ENCODE measurements at regions of chr19 and their contacts with region 1.

Region 1: GRCh38 chr19:2096480-2097329 is at the start of gene IZUMO4:
- DNase-seq: peak; percentile 71
- ATAC-seq: peak; percentile 83
- H3K4me3 ChIP-seq: peak within 1 kb of the TSS; percentile 93
- H3K27ac ChIP-seq: peak within 1 kb of the TSS; percentile 93
- H3K4me1 ChIP-seq: peaks cover 21% of the 10 kb centered on the region
- H3K27me3 ChIP-seq: no peaks in the 10 kb centered on the region
- CTCF ChIP-seq: peak; percentile 41 to 73 (median 54)
- EP300 ChIP-seq: no peak
- POLR2A ChIP-seq: no peak; the same call in 1 of the 2 replicates
- RAD21 ChIP-seq: no peak
- polyA plus RNA-seq, gene IZUMO4: 0.53 to 1.9 TPM

Region 2: DNA sequence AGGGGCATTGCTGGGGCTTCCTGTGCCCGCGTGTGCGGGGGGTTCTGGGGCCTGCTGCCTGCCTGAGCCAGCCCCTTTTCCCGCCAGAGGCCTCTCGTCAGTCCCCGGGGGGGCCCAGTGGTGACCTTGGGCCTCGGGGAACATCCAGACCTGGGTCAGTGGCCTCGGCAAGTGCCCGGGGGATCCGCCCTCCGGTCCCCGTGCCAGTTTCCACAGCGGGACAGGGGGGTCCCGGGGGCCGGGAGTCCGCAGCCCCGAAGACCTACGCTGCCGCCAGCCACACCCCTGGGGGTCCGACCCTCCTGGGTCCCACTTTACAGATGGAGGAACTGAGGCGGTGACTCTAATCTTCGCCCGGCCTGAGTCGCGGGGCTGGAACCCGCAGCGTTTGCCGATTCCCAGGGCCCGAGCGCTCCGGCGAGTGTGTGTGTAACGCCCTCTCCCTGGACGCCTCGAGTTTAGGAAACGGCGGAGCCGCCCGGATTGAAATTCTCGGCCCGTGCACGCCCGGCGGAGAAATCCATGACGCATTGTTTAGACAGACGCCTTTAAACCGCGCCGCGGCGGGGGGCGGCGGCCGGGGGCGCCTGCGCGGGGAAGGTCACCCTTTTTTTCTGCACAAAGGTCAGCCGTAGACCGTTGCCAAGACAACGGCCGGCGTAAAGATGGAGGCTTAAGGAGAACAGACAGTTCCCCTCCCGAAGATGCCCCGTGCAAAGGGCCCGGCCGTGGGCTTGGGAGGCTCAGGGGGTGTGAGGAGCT is 771.7 kb before region 1 on chr19:
- CTCF ChIA-PET with region 1: no interaction called
- POLR2A ChIA-PET with region 1: no interaction called
- RAD21 ChIA-PET with region 1: no interaction called
- SMC1A ChIA-PET with region 1: no interaction called
- in situ Hi-C with region 1: no loop called
- intact Hi-C with region 1: no loop called
- DNase-seq: no peak
- ATAC-seq: no peak; the same call in 2 of the 3 replicates
- H3K4me3 ChIP-seq: no peak overlapping the region
- H3K27ac ChIP-seq: no peak overlapping the region
- H3K4me1 ChIP-seq: no peaks in the 10 kb centered on the region
- H3K27me3 ChIP-seq: peaks cover 6 to 10% of the 10 kb centered on the region in 2 experiments; a peak in 3 of 4 replicates
- CTCF ChIP-seq: no peak
- EP300 ChIP-seq: no peak
- POLR2A ChIP-seq: no peak
- RAD21 ChIP-seq: no peak

Region 3: GRCh38 chr19:1956868-1957492 is 139.7 kb before region 1 on chr19:
- CTCF ChIA-PET with region 1: no interaction called
- POLR2A ChIA-PET with region 1: no interaction called
- RAD21 ChIA-PET with region 1: no interaction called
- SMC1A ChIA-PET with region 1: no interaction called
- in situ Hi-C with region 1: no loop called
- intact Hi-C with region 1: no loop called
- DNase-seq: no peak
- ATAC-seq: no peak
- H3K4me3 ChIP-seq: no peak overlapping the region
- H3K27ac ChIP-seq: no peak overlapping the region
- H3K4me1 ChIP-seq: no peaks in the 10 kb centered on the region
- H3K27me3 ChIP-seq: no peaks in the 10 kb centered on the region
- CTCF ChIP-seq: no peak
- EP300 ChIP-seq: no peak
- POLR2A ChIP-seq: no peak
- RAD21 ChIP-seq: no peak

Region 4: DNA sequence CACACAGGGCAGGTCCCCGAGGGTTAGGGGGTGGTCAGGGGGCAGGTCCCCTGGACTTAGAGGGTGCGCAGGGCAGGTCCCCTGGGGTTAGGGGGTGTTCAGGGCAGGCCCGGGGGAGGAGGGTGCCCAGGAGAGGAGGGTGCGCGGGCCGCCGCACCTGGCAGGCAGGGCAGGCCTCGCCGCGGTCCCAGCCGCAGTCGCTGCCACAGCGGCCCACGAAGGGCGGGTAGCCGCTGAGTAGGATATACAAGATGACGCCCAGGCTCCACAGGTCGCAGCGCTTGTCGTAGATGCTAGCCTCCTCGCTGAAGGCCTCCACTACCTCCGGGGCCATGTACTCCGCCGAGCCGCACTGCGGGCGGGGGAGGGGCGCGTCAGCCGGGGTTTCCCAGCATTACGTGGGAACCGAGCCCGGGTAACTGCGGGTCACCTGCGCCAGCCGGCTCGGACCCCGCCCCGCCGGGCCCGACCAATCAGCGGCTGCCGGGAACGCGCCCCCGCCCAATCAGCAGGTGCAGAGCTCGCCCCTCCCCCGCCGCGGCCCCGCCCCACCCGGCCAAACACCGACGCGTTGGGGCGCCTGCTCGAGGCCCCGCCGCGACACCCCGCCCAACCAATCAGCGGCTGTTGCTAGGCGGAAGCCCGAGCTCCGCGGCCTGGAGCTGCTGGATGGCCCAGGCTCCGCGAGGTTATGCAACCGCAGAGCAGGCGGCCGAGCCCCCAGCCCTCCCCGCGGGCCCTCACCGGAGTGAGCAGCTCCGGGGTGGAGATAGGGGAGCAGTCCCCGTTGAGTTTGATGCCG is 54.8 kb before region 1 on chr19:
- CTCF ChIA-PET with region 1: interaction called, 10 read pairs
- POLR2A ChIA-PET with region 1: interaction called, 37 read pairs
- RAD21 ChIA-PET with region 1: interaction called, 10 read pairs
- SMC1A ChIA-PET with region 1: interaction called, 4 read pairs
- in situ Hi-C with region 1: no loop called
- intact Hi-C with region 1: no loop called
- DNase-seq: peak; percentile 73
- ATAC-seq: peak; percentile 86
- H3K4me3 ChIP-seq: peak overlapping the region; percentile 71
- H3K27ac ChIP-seq: peak overlapping the region; percentile 92
- H3K4me1 ChIP-seq: peaks cover 39% of the 10 kb centered on the region
- H3K27me3 ChIP-seq: no peaks in the 10 kb centered on the region
- CTCF ChIP-seq: no peak
- EP300 ChIP-seq: peak; percentile 41 to 64; a peak in 1 of 4 replicates
- POLR2A ChIP-seq: peak; percentile 87
- RAD21 ChIP-seq: no peak

Region 5: DNA sequence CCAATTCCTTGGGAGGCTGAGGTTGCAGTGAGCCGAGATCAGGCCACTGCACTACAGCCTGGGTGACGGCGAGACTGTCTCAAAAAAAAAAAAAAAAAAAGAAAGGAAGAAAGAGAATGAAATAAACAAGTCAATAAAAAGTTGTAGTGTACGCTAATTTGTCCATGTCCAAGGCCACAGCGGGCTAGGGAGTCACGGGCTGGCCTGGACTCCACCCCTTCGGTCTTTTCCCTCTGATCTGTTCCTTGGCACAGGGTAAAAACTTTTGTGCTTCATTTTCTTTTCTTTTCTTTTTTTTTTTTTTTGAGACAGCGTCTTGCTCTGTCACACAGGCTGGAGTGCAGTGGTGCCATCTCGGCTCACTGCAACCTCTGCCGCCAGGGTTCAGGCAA is 26.3 kb before region 1 on chr19:
- CTCF ChIA-PET with region 1: interaction called, 3 read pairs
- POLR2A ChIA-PET with region 1: interaction called, 11 read pairs
- RAD21 ChIA-PET with region 1: interaction called, 4 read pairs
- SMC1A ChIA-PET with region 1: interaction called, 4 read pairs
- in situ Hi-C with region 1: no loop called
- intact Hi-C with region 1: no loop called
- DNase-seq: no peak
- ATAC-seq: no peak; the same call in 2 of the 3 replicates
- H3K4me3 ChIP-seq: no peak overlapping the region
- H3K27ac ChIP-seq: no peak overlapping the region
- H3K4me1 ChIP-seq: peaks cover 17% of the 10 kb centered on the region
- H3K27me3 ChIP-seq: no peaks in the 10 kb centered on the region
- CTCF ChIP-seq: no peak
- EP300 ChIP-seq: no peak
- POLR2A ChIP-seq: no peak
- RAD21 ChIP-seq: no peak

Region 6: DNA sequence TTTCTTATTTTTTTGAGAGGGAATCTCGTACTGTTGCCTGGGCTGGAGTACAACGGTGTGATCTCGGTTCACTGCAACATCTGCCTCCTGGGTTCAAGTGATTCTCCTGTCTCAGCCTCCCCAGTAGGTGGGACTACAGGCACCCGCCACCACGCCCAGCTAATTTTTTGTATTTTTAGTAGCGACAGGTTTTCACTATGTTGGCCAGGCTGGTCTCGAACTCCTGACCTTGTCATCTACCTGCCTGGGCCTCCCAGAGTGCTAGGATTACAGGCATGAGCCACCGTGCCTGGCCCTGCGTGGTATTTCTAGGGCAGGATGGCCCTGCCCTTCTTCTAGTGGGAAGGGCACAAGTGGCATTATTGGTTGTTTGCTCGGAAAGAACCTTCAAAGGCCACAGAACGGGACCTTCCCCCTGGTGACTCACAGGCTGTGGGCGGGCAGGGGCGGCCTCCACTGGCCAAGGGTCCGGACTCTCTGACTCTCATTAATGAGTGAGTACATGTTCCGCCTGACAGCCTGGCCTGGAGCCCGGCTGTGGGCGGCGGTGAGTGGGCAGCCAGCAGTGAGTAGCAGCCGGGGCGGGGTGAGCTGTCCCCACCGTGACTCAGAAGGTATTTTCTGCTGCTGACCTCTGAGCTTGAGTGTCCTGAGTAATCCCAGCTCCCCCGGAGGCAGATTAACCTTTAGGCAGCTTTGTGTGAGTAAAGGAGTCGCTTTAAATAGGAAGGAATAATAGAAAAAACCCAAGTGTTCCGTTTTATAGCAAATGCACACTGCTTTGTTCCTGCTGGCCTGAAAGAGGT is 72.1 kb after region 1 on chr19:
- CTCF ChIA-PET with region 1: no interaction called
- POLR2A ChIA-PET with region 1: interaction called, 16 read pairs
- RAD21 ChIA-PET with region 1: interaction called, 4 read pairs
- SMC1A ChIA-PET with region 1: no interaction called
- in situ Hi-C with region 1: no loop called
- intact Hi-C with region 1: no loop called
- DNase-seq: peak; percentile 92
- ATAC-seq: peak; percentile 70
- H3K4me3 ChIP-seq: peak overlapping the region; percentile 92; the same call in 1 of the 2 replicates
- H3K27ac ChIP-seq: peak overlapping the region; percentile 74
- H3K4me1 ChIP-seq: peaks cover 49% of the 10 kb centered on the region
- H3K27me3 ChIP-seq: no peaks in the 10 kb centered on the region
- CTCF ChIP-seq: 0 out of 6 replicates have a peak, but pooled peaks of 1 of the 3 experiments have one; percentile 14
- EP300 ChIP-seq: peak; percentile 52 to 75; a peak in 2 of 4 replicates
- POLR2A ChIP-seq: peak; percentile 59; the same call in 1 of the 2 replicates
- RAD21 ChIP-seq: no peak

Measured in GM12878 (cell line).